OCI-LY7 (cell line): ENCODE measurements at regions of chr10 and their contacts with region 1.

Region 1: DNA sequence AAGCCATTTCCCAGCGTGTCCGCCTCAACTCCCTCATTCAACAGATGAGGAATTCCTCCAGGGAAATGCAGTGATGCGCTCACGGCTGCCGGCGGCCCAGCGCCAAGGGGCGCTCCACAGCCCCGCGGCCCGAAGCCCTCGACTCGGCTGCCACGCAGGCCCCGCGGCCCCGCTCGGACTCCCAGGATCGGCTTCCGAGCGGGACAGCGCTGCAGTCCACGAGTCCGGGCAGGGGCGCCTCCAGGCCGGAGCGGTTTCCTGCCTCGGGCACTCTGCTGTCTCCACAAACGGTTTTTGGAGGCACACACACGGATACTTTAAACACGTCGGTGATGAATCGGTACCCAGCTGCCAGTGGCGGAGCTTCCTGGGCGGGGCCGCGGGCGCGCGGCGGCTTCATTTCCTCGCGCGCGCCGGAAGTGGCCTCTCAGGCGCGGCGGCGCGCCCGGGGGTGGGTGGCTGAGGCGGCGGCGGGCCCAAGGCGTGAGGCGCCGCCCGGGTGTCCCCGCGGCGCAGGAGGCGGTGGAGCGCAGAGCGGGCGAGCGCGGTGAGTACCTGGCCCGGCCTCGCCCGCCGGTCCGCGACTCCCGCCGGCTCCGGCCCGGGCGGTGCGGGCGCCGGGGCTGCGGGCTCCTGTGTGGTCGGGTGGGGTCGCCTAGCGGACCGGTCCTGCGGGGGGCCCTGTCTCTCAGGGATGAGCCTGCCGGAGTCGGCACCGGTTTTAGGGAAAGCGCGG is at the start of gene CSGALNACT2:
- DNase-seq: peak; percentile 93
- H3K4me3 ChIP-seq: peak within 1 kb of the TSS; percentile 92
- H3K27ac ChIP-seq: peak within 1 kb of the TSS; percentile 83
- H3K4me1 ChIP-seq: peaks cover 80% of the 10 kb centered on the region
- CTCF ChIP-seq: 0 out of 2 replicates have a peak, but pooled peaks have one; percentile 29
- total RNA-seq, gene CSGALNACT2: 13.2 and 16.7 TPM in 2 replicates

Region 2: DNA sequence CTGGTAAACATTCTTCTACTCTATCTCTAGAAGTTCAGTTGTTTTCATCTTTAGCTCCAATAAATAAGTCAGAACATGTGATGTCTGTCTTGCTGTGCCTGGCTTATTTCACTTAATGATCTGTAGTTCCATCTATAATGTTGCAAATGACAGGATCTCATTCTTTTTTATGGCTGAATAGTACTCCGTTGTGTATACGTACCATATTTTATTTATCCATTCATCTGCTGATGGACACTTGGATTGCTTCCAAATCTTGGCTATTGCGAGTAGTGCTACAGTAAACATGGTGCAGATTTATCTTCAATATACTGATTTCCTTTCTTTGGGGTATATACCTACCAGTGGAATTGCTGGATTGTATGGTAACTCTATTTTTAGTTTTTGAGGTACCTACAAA is 624.3 kb before region 1 on chr10:
- CTCF ChIA-PET with region 1: no interaction called
- POLR2A ChIA-PET with region 1: no interaction called
- intact Hi-C with region 1: no loop called
- DNase-seq: no peak
- H3K4me3 ChIP-seq: no peak overlapping the region
- H3K27ac ChIP-seq: no peak overlapping the region
- H3K4me1 ChIP-seq: no peaks in the 10 kb centered on the region
- CTCF ChIP-seq: no peak

Region 3: DNA sequence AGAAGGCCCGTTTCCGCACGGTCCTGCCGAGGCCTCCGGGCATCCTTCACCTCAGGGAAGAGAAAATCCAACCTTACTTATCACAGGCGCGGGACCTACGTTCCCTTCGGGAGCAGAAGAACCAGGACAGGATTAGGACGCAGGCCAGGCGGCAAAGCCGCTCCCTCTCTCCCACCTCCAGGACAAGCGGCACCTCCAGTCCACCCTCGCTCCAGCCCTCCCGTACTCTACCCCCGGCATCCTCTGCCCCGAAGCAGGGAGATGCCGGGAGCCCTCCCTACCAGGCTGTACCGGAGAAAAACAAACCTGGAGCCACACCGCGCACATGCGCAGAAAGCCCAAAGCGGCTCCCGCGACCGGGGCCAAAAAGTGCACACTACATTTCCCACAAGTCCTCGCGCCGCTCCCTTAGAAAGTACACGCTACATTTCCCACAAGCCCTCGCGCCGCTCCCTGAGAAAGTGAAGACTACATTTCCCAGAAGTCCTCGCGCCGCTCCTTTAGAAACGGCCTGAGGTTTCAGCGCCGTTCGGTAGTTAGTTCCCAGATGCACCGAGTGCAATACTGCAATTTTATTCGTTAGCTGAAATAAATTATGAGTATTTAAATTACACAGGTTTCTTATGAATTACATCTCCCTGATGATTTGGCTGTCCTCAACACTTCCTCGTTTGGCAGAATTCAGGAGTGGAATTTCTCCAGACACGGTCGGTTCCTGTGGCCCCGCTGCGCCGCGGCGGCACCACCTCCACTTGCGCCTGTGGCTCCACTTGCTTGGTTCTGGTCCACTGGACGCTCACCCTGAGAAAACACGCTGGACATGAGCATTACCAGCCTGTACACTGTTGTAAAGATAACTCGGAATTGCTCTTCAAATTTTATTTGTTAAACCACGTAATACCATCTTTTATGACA is 585.4 kb before region 1 on chr10:
- CTCF ChIA-PET with region 1: no interaction called
- POLR2A ChIA-PET with region 1: no interaction called
- intact Hi-C with region 1: loop called (anchors 10 kb)
- DNase-seq: peak; percentile 97
- H3K4me3 ChIP-seq: peak overlapping the region; percentile 89
- H3K27ac ChIP-seq: peak overlapping the region; percentile 25
- H3K4me1 ChIP-seq: peaks cover 28% of the 10 kb centered on the region
- CTCF ChIP-seq: no peak

Region 4: DNA sequence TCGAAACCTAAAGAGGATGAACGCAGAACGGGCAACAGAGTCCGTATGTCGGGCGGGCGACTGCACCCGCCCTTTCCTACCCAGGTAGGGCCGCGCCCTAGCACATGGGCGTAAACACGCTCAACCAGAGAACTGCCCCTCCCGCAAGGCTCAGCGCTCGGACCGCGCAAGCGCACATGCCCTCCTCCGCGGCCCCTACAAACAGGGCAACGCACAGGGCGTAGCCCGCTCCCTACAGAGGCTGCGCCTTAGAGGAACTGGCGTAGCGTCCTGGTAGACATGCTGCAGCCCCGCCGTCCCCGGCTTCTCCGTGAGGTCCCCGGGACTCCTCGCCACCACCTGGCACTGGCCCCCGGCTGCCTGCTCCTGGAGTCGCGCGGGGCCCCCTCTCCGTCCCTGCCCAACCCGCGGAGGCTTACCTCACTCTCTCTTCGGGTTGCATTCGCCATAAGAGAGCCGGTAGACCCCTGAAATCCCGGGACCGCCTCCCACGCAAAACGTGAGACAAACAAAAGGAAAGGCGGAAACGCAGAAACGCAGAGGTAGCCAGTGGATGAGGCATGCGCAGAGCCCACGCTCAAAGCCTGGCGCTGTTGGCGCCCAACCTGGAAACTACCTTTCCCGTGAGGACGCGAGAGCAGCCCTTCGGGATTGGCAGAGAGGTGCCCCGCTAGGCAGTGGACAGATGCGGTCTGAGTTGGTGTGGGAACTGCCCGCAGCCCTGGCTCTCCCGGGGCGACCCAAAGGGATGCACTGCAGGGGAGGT is 500.0 kb before region 1 on chr10 and contains the start of gene ZNF33B:
- CTCF ChIA-PET with region 1: no interaction called
- POLR2A ChIA-PET with region 1: no interaction called
- intact Hi-C with region 1: loop called (anchors 10 kb)
- DNase-seq: peak; percentile 97
- H3K4me3 ChIP-seq: peak within 1 kb of the TSS; percentile 76
- H3K27ac ChIP-seq: peak within 1 kb of the TSS; percentile 86
- H3K4me1 ChIP-seq: peaks cover 20% of the 10 kb centered on the region
- CTCF ChIP-seq: no peak
- total RNA-seq, gene ZNF33B: 12.6 and 16.9 TPM in 2 replicates

Region 5: GRCh38 chr10:43396928-43397624 is 258.9 kb after region 1 on chr10:
- CTCF ChIA-PET with region 1: no interaction called
- POLR2A ChIA-PET with region 1: interaction called, 7 read pairs
- intact Hi-C with region 1: loop called (anchors 2 kb)
- DNase-seq: peak; percentile 94
- H3K4me3 ChIP-seq: peak overlapping the region; percentile 92
- H3K27ac ChIP-seq: peak overlapping the region; percentile 82
- H3K4me1 ChIP-seq: peaks cover 63% of the 10 kb centered on the region
- CTCF ChIP-seq: no peak

Region 6: GRCh38 chr10:43453266-43453831 is 315.2 kb after region 1 on chr10:
- CTCF ChIA-PET with region 1: no interaction called
- POLR2A ChIA-PET with region 1: interaction called, 3 read pairs
- intact Hi-C with region 1: loop called (anchors 2 kb)
- DNase-seq: peak; percentile 60
- H3K4me3 ChIP-seq: peak overlapping the region; percentile 61
- H3K27ac ChIP-seq: peak overlapping the region; percentile 100
- H3K4me1 ChIP-seq: peaks cover 55% of the 10 kb centered on the region
- CTCF ChIP-seq: no peak